Posterior cingulate gyrus (tissue), 11 donors: ENCODE measurements at regions of chr10 and their contacts with region 1.

Region 1: DNA sequence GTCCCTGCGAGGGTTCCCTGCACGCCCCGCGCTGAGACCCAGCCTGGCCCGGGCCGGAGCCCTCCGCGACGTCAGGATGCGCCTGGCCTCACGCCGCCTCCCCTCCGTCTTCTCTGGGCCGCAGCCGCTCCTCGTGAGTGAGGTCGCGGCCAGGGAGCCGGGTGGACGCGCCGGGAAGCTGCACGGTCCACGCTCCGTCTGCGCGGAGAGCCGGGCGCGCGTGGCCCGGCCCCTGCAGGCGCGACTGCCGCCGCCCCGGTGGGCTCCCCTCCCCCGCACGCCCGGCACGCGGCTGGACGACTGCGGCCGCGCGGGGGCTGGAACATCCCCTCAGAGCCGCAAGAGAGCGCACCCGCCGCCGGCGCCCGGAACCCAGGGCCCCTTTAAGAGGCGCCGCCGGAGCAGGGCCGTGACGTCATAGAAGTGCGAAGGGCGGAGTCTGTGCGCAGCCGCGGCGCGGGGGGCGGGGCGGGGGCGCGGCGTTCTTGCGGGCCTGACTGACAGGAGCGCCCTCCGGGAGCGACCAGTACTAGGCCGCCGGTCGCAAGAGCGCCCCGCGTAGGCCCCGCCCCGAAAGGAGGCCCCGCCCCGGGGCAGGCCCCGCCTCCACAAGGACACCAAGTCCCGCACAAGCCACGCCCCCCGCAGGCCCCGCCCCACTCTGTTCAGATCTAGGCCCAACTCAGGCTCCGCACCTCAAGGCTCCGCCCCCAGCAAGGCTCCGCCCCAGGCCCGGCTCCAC is 445 bp upstream of the INPP5A start:
- DNase-seq: peak; percentile 100

Region 2: DNA sequence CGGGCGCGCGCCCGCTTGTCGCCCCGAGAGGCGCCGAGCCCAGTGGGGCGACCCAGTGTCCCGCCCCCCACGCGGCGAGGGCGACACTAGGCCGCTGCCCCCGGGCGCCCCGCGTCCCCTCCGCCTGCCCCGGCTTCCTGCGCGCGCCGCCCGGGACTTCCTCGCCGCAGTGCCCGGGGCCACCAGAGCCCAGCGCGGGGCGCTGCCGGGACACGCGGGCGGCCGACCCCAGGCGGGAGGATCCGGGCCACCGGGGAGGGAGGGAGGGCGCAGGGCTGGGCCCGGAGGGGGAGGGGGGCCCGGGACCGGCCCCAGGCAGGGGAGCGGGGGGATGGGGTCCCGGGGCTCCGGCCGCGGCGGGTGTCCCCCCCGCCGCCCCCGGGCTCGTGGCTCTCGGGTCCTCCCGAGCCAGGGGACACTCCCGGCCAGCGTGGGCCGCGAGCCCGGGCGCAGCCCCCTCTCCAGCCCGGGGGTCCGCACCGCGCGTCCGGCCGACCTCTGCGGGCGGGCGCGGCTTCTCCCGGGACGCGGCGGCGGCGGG is 140.6 kb before region 1 on chr10:
- intact Hi-C with region 1: loop called (anchors 10 kb)
- DNase-seq: peak in 4 of 10 donors; percentile 55 to 81 (median 72)

Region 3: GRCh38 chr10:132458593-132459300 is 78.4 kb before region 1 on chr10:
- intact Hi-C with region 1: loop called (anchors 5 kb)
- DNase-seq: peak in 8 of 10 donors; percentile 34 to 94 (median 74)